ENCODE measurements at regions of chr19 and their contacts with region 1.

Region 1: GRCh38 chr19:43575156-43575950 is at the starts of genes PINLYP and XRCC1:
- DNase-seq: peak; percentile 81
- ATAC-seq: peak; percentile 100
- H3K4me3 ChIP-seq: peak within 1 kb of the TSS; percentile 74 to 99
- H3K27ac ChIP-seq: peak within 1 kb of the TSS; percentile 96
- H3K4me1 ChIP-seq: peaks cover 3% of the 10 kb centered on the region; the same call in 1 of the 2 replicates
- H3K27me3 ChIP-seq: no peaks in the 10 kb centered on the region
- CTCF ChIP-seq: no peak
- total RNA-seq, gene PINLYP: 0.21 TPM
- total RNA-seq, gene XRCC1: 20.1 TPM

Region 2: GRCh38 chr19:43668406-43669158 is 93.2 kb after region 1 on chr19:
- CTCF ChIA-PET with region 1: no interaction called
- POLR2A ChIA-PET with region 1: interaction called, 16 read pairs
- in situ Hi-C with region 1: no loop called
- intact Hi-C with region 1: no loop called
- DNase-seq: peak; percentile 94
- ATAC-seq: peak; percentile 94
- H3K4me3 ChIP-seq: peak overlapping the region; percentile 53 to 76
- H3K27ac ChIP-seq: peak overlapping the region; percentile 51
- H3K4me1 ChIP-seq: peaks cover 7% of the 10 kb centered on the region
- H3K27me3 ChIP-seq: no peaks in the 10 kb centered on the region
- CTCF ChIP-seq: no peak